CD4-positive, alpha-beta T cell (primary cell): ENCODE measurements at regions of chrX and their contacts with region 1.

Region 1: DNA sequence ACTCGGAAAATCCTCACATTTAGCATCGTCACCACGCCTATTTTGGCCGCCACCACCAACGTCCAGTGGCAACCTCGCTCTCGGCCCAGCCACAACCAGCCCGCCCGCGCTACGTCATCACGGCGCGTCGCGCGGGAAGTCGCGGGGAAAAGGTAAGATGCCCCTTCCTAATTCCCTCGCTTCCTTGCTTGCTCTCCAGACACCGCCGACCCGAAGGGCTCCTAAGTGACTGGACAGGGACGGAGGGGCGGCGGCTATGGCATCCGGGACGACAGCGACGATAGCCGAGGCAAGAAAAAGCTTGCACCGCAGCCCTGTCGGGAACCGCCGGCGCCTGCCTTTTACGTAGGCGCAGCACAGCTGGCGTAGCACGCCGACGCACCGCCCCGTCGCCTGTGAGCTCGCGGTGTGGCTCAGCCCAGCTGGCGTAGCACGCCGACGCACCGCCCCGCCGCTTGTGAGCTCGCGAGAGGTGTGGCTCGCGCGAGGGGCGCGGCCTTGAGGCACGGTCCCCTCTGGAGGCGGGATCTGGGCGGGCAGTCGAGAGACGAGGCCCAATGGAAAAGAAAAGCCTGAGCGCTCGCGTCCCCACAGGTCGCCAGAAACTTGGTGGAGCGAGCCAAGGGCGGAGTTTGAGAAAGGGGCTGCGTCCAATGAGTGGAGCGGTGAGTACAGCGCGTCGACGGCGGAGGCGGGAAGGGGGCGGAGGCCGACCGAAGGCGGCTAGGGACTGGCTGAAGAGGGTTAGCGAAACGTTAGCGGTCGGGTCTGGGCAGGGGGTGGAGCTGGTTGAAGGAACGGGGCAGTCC is at the start of gene HDAC6:
- DNase-seq: peak; percentile 87 to 99 (median 93)
- ATAC-seq: peak; percentile 84
- H3K4me3 ChIP-seq: peak within 1 kb of the TSS; percentile 87
- H3K4me3 Mint-ChIP-seq: peak within 1 kb of the TSS; percentile 93
- H3K27ac ChIP-seq: peak within 1 kb of the TSS; percentile 89 to 97
- H3K27ac Mint-ChIP-seq: peak within 1 kb of the TSS; percentile 99
- H3K4me1 ChIP-seq: peaks cover 17% of the 10 kb centered on the region
- H3K4me1 Mint-ChIP-seq: peaks cover 18% of the 10 kb centered on the region
- H3K27me3 ChIP-seq: no peaks in the 10 kb centered on the region
- H3K27me3 Mint-ChIP-seq: no peaks in the 10 kb centered on the region
- CTCF ChIP-seq: no peak
- total RNA-seq, gene HDAC6: 95.2 to 95.7 TPM

Region 2: DNA sequence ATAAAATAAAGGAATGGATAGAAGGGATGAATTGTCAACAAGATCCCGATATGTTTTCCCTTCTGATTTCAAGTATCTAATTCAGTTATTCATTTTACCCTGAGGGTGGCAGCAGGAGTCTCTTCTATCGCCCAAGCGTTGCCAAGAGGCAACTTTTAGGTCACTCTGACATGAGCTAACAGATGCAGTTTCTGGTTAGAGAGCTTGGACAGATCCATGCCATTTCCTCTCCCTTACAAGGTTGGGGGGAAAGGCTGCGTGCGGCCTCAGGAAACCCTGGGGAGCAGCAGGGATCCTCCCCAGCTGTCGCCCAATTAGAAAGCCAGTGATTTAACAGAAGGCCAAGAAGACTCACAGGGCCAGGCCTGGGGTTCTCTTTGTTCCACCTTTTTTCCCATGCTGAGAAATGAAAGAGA is 153.1 kb before region 1 on chrX:
- CTCF ChIA-PET with region 1: interaction called, 8 read pairs
- POLR2A ChIA-PET with region 1: interaction called, 9 read pairs
- intact Hi-C with region 1: loop called in 1 of 2 experiments (anchors 5 kb)
- DNase-seq: peak; percentile 5 to 74 (median 21)
- ATAC-seq: peak; percentile 78
- H3K4me3 ChIP-seq: no peak overlapping the region
- H3K4me3 Mint-ChIP-seq: no peak overlapping the region
- H3K27ac ChIP-seq: no peak overlapping the region
- H3K27ac Mint-ChIP-seq: no peak overlapping the region
- H3K4me1 ChIP-seq: peaks cover 3% of the 10 kb centered on the region
- H3K4me1 Mint-ChIP-seq: peaks cover 7% of the 10 kb centered on the region
- H3K27me3 ChIP-seq: no peaks in the 10 kb centered on the region
- H3K27me3 Mint-ChIP-seq: no peaks in the 10 kb centered on the region
- CTCF ChIP-seq: peak; percentile 51

Region 3: GRCh38 chrX:48683411-48683982 is 118.0 kb before region 1 on chrX and contains the start of gene WAS:
- CTCF ChIA-PET with region 1: no interaction called
- POLR2A ChIA-PET with region 1: interaction called, 14 read pairs
- intact Hi-C with region 1: loop called (anchors 5 to 10 kb)
- DNase-seq: peak in 12 of 14 experiments; percentile 14 to 76 (median 36)
- ATAC-seq: peak; percentile 85
- H3K4me3 ChIP-seq: peak within 1 kb of the TSS; percentile 82
- H3K4me3 Mint-ChIP-seq: peak within 1 kb of the TSS; percentile 95
- H3K27ac ChIP-seq: peak within 1 kb of the TSS; percentile 73 to 83
- H3K27ac Mint-ChIP-seq: peak within 1 kb of the TSS; percentile 96
- H3K4me1 ChIP-seq: peaks cover 61% of the 10 kb centered on the region
- H3K4me1 Mint-ChIP-seq: peaks cover 50% of the 10 kb centered on the region
- H3K27me3 ChIP-seq: no peaks in the 10 kb centered on the region
- H3K27me3 Mint-ChIP-seq: no peaks in the 10 kb centered on the region
- CTCF ChIP-seq: no peak
- total RNA-seq, gene WAS: 63.7 to 67.4 TPM

Region 4: GRCh38 chrX:48715072-48715471 is 86.4 kb before region 1 on chrX:
- CTCF ChIA-PET with region 1: no interaction called
- POLR2A ChIA-PET with region 1: interaction called, 12 read pairs
- intact Hi-C with region 1: no loop called
- DNase-seq: peak in 1 of 14 experiments; percentile 29
- ATAC-seq: peak; percentile 22
- H3K4me3 ChIP-seq: no peak overlapping the region
- H3K4me3 Mint-ChIP-seq: peak overlapping the region; percentile 26
- H3K27ac ChIP-seq: no peak overlapping the region
- H3K27ac Mint-ChIP-seq: peak overlapping the region; percentile 93
- H3K4me1 ChIP-seq: peaks cover 80% of the 10 kb centered on the region
- H3K4me1 Mint-ChIP-seq: peaks cover 86% of the 10 kb centered on the region
- H3K27me3 ChIP-seq: no peaks in the 10 kb centered on the region
- H3K27me3 Mint-ChIP-seq: no peaks in the 10 kb centered on the region
- CTCF ChIP-seq: no peak

Region 5: DNA sequence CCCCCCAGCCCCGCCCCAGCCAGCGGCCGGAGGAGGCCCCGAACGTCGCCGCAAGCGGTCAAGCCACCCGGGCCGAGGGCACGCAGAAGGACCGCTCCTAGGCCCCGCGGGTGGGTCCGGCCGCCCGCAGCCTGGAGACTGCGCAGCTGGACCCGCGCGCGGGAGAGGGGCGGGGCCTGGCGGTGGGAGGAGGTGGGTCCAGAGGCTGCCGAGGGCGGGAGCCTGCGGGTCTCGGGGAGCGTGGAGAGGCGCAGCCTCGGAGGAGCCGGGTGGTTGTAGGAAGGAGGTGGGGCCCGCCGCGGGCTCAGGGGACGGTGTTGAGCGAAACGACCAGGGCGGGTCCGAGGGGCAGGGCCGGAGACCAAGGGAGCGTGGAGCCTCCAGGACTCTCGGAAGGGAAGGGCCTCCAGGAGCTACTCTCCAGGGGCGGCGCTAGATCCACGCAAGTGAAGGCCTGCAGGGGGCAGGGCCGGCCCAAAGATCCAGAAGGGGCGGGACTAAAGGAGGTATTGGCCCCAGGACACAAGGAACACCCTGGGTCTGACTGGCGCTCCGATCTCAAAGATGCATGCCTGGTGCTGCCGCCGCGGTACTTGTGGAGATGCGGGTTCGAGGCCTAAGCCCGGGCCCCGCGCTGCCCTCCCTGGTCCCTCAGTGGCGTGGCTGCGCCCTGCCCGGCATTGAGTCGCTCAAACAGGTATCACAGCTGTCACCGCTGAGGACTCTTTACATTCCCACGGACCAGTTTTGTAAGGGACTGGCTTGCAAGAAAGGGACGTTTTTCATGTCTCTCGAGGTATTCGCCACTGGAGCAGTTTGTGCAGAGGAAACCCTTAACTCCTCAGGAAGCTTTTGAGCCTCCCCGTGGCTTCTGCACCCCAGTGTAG is 90.2 kb after region 1 on chrX:
- CTCF ChIA-PET with region 1: interaction called, 3 read pairs
- POLR2A ChIA-PET with region 1: interaction called, 18 read pairs
- intact Hi-C with region 1: loop called in 1 of 2 experiments (anchors 5 kb)
- DNase-seq: peak; percentile 52 to 90 (median 72)
- ATAC-seq: peak; percentile 88
- H3K4me3 ChIP-seq: peak overlapping the region; percentile 60
- H3K4me3 Mint-ChIP-seq: peak overlapping the region; percentile 86
- H3K27ac ChIP-seq: peak overlapping the region in 1 of 2 donors; percentile 29
- H3K27ac Mint-ChIP-seq: peak overlapping the region; percentile 71
- H3K4me1 ChIP-seq: peaks cover 27% of the 10 kb centered on the region
- H3K4me1 Mint-ChIP-seq: peaks cover 26% of the 10 kb centered on the region
- H3K27me3 ChIP-seq: no peaks in the 10 kb centered on the region
- H3K27me3 Mint-ChIP-seq: no peaks in the 10 kb centered on the region
- CTCF ChIP-seq: peak; percentile 40

Region 6: GRCh38 chrX:48937054-48937907 is 135.8 kb after region 1 on chrX:
- CTCF ChIA-PET with region 1: no interaction called
- POLR2A ChIA-PET with region 1: interaction called, 10 read pairs
- intact Hi-C with region 1: loop called in 1 of 2 experiments (anchors 2 kb)
- DNase-seq: peak; percentile 77 to 94 (median 88)
- ATAC-seq: peak; percentile 68
- H3K4me3 ChIP-seq: peak overlapping the region; percentile 49
- H3K4me3 Mint-ChIP-seq: peak overlapping the region; percentile 82
- H3K27ac ChIP-seq: peak overlapping the region; percentile 92 to 93
- H3K27ac Mint-ChIP-seq: peak overlapping the region; percentile 98
- H3K4me1 ChIP-seq: peaks cover 85% of the 10 kb centered on the region
- H3K4me1 Mint-ChIP-seq: peaks cover 90% of the 10 kb centered on the region
- H3K27me3 ChIP-seq: no peaks in the 10 kb centered on the region
- H3K27me3 Mint-ChIP-seq: no peaks in the 10 kb centered on the region
- CTCF ChIP-seq: peak; percentile 40

Region 7: DNA sequence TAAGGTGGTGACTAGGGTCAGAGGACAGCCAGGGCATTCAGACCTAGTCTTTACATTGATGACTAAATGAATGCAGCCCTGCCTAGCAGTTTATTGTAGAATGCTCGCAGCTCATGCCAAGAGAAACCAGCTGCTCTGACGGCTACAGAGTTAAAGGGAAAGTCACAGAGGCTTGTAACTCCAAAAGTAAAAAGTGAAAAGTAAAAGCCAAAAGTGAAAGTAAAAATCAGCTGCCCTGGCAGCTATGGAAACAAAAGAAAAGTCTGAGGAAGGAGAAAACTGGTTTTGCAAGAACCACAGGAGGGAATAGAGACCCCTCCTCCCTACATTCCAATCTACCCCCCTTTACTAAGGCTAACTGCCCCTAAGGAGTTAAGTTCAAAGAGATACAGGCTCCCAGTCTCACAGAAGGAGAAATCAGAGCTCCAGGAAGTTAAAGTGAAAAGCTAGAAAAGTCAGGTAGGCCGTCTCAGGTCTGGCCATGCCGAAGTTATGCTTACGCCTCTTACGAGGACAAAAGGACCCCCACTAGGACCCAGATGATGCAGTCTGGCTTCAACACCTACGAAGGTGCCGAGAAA is 508.0 kb after region 1 on chrX:
- CTCF ChIA-PET with region 1: no interaction called
- POLR2A ChIA-PET with region 1: no interaction called
- intact Hi-C with region 1: loop called in 1 of 2 experiments (anchors 5 kb)
- DNase-seq: peak in 6 of 14 experiments; percentile 2 to 51 (median 36)
- ATAC-seq: peak; percentile 72
- H3K4me3 ChIP-seq: peak overlapping the region; percentile 58
- H3K4me3 Mint-ChIP-seq: peak overlapping the region; percentile 88
- H3K27ac ChIP-seq: peak overlapping the region; percentile 26 to 63
- H3K27ac Mint-ChIP-seq: peak overlapping the region; percentile 98
- H3K4me1 ChIP-seq: peaks cover 21% of the 10 kb centered on the region
- H3K4me1 Mint-ChIP-seq: peaks cover 25% of the 10 kb centered on the region
- H3K27me3 ChIP-seq: no peaks in the 10 kb centered on the region
- H3K27me3 Mint-ChIP-seq: no peaks in the 10 kb centered on the region
- CTCF ChIP-seq: no peak